ENCODE measurements at regions of chr12 and their contacts with region 1.

Region 1: GRCh38 chr12:949453-950191 is at the start of gene RAD52:
- DNase-seq: peak; percentile 93 to 98
- ATAC-seq: peak; percentile 90 to 97 (median 91)
- H3K4me3 ChIP-seq: peak within 1 kb of the TSS; percentile 78
- H3K4me3 Mint-ChIP-seq: peak within 1 kb of the TSS; percentile 98
- H3K27ac ChIP-seq: peak within 1 kb of the TSS; percentile 54
- H3K27ac Mint-ChIP-seq: peak within 1 kb of the TSS; percentile 95 to 97
- H3K4me1 ChIP-seq: peaks cover 15% of the 10 kb centered on the region
- H3K4me1 Mint-ChIP-seq: peaks cover 26 to 28% of the 10 kb centered on the region in 2 donors
- H3K27me3 ChIP-seq: no peaks in the 10 kb centered on the region
- H3K27me3 Mint-ChIP-seq: no peaks in the 10 kb centered on the region
- CTCF ChIP-seq: peak; percentile 91
- total RNA-seq, gene RAD52: 9.4 to 15.5 (median 13.7) TPM

Region 2: GRCh38 chr12:563250-563781 is 386.3 kb before region 1 on chr12:
- intact Hi-C with region 1: loop called (anchors 5 kb)
- DNase-seq: peak in 1 of 2 donors; percentile 82
- ATAC-seq: peak; percentile 78 to 85 (median 84)
- H3K4me3 ChIP-seq: peak overlapping the region; percentile 15
- H3K4me3 Mint-ChIP-seq: peak overlapping the region; percentile 85
- H3K27ac ChIP-seq: peak overlapping the region; percentile 76
- H3K27ac Mint-ChIP-seq: peak overlapping the region; percentile 87 to 90
- H3K4me1 ChIP-seq: peaks cover 59% of the 10 kb centered on the region
- H3K4me1 Mint-ChIP-seq: peaks cover 53 to 85% of the 10 kb centered on the region in 2 donors
- H3K27me3 ChIP-seq: no peaks in the 10 kb centered on the region
- H3K27me3 Mint-ChIP-seq: no peaks in the 10 kb centered on the region
- CTCF ChIP-seq: no peak

Region 3: GRCh38 chr12:575948-576612 is 373.5 kb before region 1 on chr12:
- intact Hi-C with region 1: loop called (anchors 1 kb)
- DNase-seq: peak; percentile 88 to 90
- ATAC-seq: peak; percentile 96 to 100 (median 96)
- H3K4me3 ChIP-seq: peak overlapping the region; percentile 14
- H3K4me3 Mint-ChIP-seq: peak overlapping the region; percentile 80
- H3K27ac ChIP-seq: no peak overlapping the region
- H3K27ac Mint-ChIP-seq: peak overlapping the region in 1 of 2 donors; percentile 72
- H3K4me1 ChIP-seq: peaks cover 13% of the 10 kb centered on the region
- H3K4me1 Mint-ChIP-seq: peaks cover 6 to 19% of the 10 kb centered on the region in 2 donors
- H3K27me3 ChIP-seq: no peaks in the 10 kb centered on the region
- H3K27me3 Mint-ChIP-seq: peaks cover 0 to 6% of the 10 kb centered on the region in 2 donors
- CTCF ChIP-seq: peak; percentile 98

Region 4: DNA sequence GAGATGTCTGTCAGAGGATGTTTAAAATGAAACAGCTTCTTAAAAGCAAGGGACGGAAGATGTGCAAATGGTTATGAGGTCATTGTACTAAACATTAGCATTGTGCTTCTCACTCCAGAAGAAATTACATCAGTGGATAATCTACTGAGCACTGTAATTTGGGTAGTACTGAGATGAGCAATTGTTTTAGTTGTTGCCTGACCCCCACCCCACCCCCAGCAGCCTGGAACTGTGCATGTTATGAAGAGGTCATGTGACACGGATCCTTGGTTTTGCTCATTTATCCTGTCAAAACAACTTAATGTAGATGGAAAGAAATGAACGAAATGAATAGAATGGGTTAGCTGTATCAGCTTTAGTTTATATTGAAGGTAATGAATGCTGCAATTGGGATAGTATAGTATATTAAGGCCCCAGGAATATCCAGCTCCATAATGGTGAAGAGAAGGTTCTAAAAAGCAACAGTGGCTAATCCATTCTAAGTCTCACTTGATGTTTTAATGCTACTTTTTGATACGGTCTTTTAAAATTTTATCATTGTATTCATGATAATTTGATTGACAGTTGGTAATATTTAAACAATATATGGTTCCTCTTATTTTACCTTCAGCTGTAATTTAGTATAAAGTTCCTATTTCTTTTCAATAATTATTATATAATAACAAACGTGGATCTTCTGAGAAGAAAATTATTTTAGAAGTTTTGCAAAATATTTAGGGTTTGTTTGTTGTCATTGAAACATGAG is 138.8 kb before region 1 on chr12:
- intact Hi-C with region 1: loop called (anchors 5 kb)
- DNase-seq: no peak
- ATAC-seq: no peak
- H3K4me3 ChIP-seq: no peak overlapping the region
- H3K4me3 Mint-ChIP-seq: no peak overlapping the region
- H3K27ac ChIP-seq: no peak overlapping the region
- H3K27ac Mint-ChIP-seq: peak overlapping the region in 1 of 2 donors; percentile 51
- H3K4me1 ChIP-seq: peaks cover 18% of the 10 kb centered on the region
- H3K4me1 Mint-ChIP-seq: peaks cover 46 to 58% of the 10 kb centered on the region in 2 donors
- H3K27me3 ChIP-seq: no peaks in the 10 kb centered on the region
- H3K27me3 Mint-ChIP-seq: no peaks in the 10 kb centered on the region
- CTCF ChIP-seq: no peak

Region 5: GRCh38 chr12:990661-991349 is 41.2 kb after region 1 on chr12 and contains the start of gene ERC1:
- intact Hi-C with region 1: loop called (anchors 2 kb)
- DNase-seq: peak; percentile 87 to 90
- ATAC-seq: peak; percentile 83 to 90 (median 87)
- H3K4me3 ChIP-seq: peak within 1 kb of the TSS; percentile 85
- H3K4me3 Mint-ChIP-seq: peak within 1 kb of the TSS; percentile 93
- H3K27ac ChIP-seq: peak within 1 kb of the TSS; percentile 73
- H3K27ac Mint-ChIP-seq: peak within 1 kb of the TSS; percentile 85 to 89
- H3K4me1 ChIP-seq: peaks cover 11% of the 10 kb centered on the region
- H3K4me1 Mint-ChIP-seq: peaks cover 27 to 48% of the 10 kb centered on the region in 2 donors
- H3K27me3 ChIP-seq: no peaks in the 10 kb centered on the region
- H3K27me3 Mint-ChIP-seq: no peaks in the 10 kb centered on the region
- CTCF ChIP-seq: no peak
- total RNA-seq, gene ERC1: 43.5 to 54.0 (median 44.9) TPM

Region 6: GRCh38 chr12:1073652-1074051 is 124.0 kb after region 1 on chr12:
- intact Hi-C with region 1: no loop called
- DNase-seq: no peak
- ATAC-seq: no peak
- H3K4me3 ChIP-seq: no peak overlapping the region
- H3K4me3 Mint-ChIP-seq: no peak overlapping the region
- H3K27ac ChIP-seq: no peak overlapping the region
- H3K27ac Mint-ChIP-seq: no peak overlapping the region
- H3K4me1 ChIP-seq: no peaks in the 10 kb centered on the region
- H3K4me1 Mint-ChIP-seq: peaks cover 0 to 13% of the 10 kb centered on the region in 2 donors
- H3K27me3 ChIP-seq: no peaks in the 10 kb centered on the region
- H3K27me3 Mint-ChIP-seq: no peaks in the 10 kb centered on the region
- CTCF ChIP-seq: no peak

Region 7: GRCh38 chr12:1093166-1093751 is 143.6 kb after region 1 on chr12:
- intact Hi-C with region 1: loop called (anchors 5 kb)
- DNase-seq: peak in 1 of 2 donors; percentile 72
- ATAC-seq: peak in 2 of 3 donors; percentile 67 to 73
- H3K4me3 ChIP-seq: no peak overlapping the region
- H3K4me3 Mint-ChIP-seq: no peak overlapping the region
- H3K27ac ChIP-seq: no peak overlapping the region
- H3K27ac Mint-ChIP-seq: no peak overlapping the region
- H3K4me1 ChIP-seq: no peaks in the 10 kb centered on the region
- H3K4me1 Mint-ChIP-seq: peaks cover 2 to 4% of the 10 kb centered on the region in 2 donors
- H3K27me3 ChIP-seq: no peaks in the 10 kb centered on the region
- H3K27me3 Mint-ChIP-seq: no peaks in the 10 kb centered on the region
- CTCF ChIP-seq: peak; percentile 70

Measured in natural killer cell (primary cell).